Colonic mucosa (tissue), 4 donors: ENCODE measurements at regions of chr17 and their contacts with region 1.

Region 1: DNA sequence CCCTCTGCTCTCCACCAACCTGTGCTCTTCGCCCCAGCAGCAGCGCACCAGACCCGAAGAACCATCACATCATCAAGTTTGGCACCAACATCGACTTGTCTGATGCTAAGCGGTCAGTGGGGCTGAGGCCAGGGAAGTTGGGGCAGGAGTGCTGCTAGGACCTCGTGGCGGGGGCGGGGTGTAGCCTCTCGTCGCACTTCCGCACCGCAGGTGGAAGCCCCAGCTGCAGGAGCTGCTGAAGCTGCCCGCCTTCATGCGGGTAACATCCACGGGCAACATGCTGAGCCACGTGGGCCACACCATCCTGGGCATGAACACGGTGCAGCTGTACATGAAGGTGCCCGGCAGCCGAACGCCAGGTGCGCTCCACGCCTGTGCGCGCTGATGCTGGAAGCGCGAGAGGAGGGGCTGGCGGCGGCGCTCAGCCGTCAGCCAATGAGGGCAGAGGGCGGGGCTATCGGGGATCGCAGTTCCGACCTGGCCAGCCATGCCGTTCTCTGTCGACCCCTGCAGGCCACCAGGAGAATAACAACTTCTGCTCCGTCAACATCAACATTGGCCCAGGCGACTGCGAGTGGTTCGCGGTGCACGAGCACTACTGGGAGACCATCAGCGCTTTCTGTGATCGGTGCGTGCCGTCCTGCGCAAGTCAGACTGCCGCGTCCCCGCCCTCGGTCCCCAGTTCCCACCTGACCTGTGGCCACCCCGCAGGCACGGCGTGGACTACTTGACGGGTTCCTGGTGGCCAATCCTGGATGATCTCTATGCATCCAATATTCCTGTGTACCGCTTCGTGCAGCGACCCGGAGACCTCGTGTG is 3.2 kb upstream of the TMEM88 start:
- DNase-seq: peak; percentile 92
- H3K4me3 ChIP-seq: no peak overlapping the region
- H3K27ac ChIP-seq: no peak overlapping the region
- H3K4me1 ChIP-seq: peaks cover 9% of the 10 kb centered on the region
- H3K27me3 ChIP-seq: no peaks in the 10 kb centered on the region
- CTCF ChIP-seq: peak; percentile 94

Region 2: DNA sequence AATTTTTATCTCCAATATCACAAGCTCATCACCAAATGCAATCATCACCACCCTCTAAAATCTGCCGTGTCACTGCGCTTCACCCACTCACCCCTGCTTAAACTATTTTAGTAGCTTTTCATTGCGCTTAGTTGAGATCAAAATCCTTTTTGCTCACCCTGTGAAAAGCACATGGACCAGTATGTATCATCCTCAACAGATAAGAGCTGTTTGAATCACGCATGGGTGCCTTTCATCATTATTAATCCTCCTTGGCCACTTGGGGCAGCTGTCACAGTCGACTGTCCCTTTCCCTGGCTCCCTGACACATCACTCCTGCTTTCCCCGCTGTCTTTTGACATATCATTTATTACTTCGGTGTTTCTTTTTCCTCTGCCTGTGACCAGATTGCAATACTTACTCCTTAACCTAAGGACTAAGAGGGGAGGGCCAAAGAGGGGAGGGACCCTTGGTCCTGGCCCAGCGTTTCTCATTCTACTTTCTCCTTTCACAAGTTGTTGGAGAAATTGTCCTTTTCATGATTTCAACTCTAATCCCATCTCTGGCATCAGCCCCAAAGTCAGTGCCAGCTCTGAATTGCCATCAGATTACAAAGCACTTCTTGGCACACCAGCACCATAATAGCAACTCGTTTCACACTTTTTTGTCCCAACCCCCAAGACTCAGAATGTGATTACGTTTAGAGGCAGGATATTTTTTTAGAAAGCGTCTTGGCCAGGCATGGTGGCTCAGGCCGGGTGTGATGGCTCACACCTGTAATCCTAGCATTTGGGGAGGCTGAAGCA is 26.2 kb before region 1 on chr17:
- intact Hi-C with region 1: loop called (anchors 2 kb)
- DNase-seq: no peak
- H3K4me3 ChIP-seq: no peak overlapping the region
- H3K27ac ChIP-seq: no peak overlapping the region
- H3K4me1 ChIP-seq: no peaks in the 10 kb centered on the region
- H3K27me3 ChIP-seq: no peaks in the 10 kb centered on the region
- CTCF ChIP-seq: no peak